ENCODE measurements at regions of chr12 and their contacts with region 1.

Region 1: GRCh38 chr12:116508145-116509121 is 50.7 kb upstream of the MAP1LC3B2 start:
- DNase-seq: no peak
- ATAC-seq: peak; percentile 46
- H3K4me3 ChIP-seq: peak overlapping the region; percentile 26 to 41
- H3K27ac ChIP-seq: peak overlapping the region; percentile 94
- H3K4me1 ChIP-seq: peaks cover 59 to 70% of the 10 kb centered on the region in 2 experiments
- H3K27me3 ChIP-seq: no peaks in the 10 kb centered on the region
- CTCF ChIP-seq: no peak
- POLR2A ChIP-seq: no peak
- RAD21 ChIP-seq: no peak

Region 2: GRCh38 chr12:116434155-116435011 is 74.0 kb before region 1 on chr12:
- CTCF ChIA-PET with region 1: no interaction called
- POLR2A ChIA-PET with region 1: interaction called, 18 read pairs
- RAD21 ChIA-PET with region 1: interaction called, 4 to 5 read pairs
- intact Hi-C with region 1: no loop called
- DNase-seq: peak; percentile 91
- ATAC-seq: peak; percentile 92
- H3K4me3 ChIP-seq: peak overlapping the region; percentile 31 to 45
- H3K27ac ChIP-seq: peak overlapping the region; percentile 93
- H3K4me1 ChIP-seq: peaks cover 19 to 48% of the 10 kb centered on the region in 2 experiments
- H3K27me3 ChIP-seq: no peaks in the 10 kb centered on the region
- CTCF ChIP-seq: no peak
- POLR2A ChIP-seq: no peak
- RAD21 ChIP-seq: no peak

Region 3: GRCh38 chr12:116492703-116493324 is 15.6 kb before region 1 on chr12:
- CTCF ChIA-PET with region 1: no interaction called
- POLR2A ChIA-PET with region 1: interaction called, 53 read pairs
- RAD21 ChIA-PET with region 1: interaction called in 1 of 2 experiments, 3 read pairs
- intact Hi-C with region 1: no loop called
- DNase-seq: peak; percentile 79
- ATAC-seq: peak; percentile 7; the same call in 1 of the 2 replicates
- H3K4me3 ChIP-seq: peak overlapping the region in 1 of 2 experiments; percentile 9; a peak in 1 of 4 replicates
- H3K27ac ChIP-seq: peak overlapping the region; percentile 99
- H3K4me1 ChIP-seq: peaks cover 53 to 70% of the 10 kb centered on the region in 2 experiments
- H3K27me3 ChIP-seq: no peaks in the 10 kb centered on the region
- CTCF ChIP-seq: no peak
- POLR2A ChIP-seq: no peak
- RAD21 ChIP-seq: 0 out of 2 replicates have a peak, but pooled peaks have one; percentile 7

Region 4: DNA sequence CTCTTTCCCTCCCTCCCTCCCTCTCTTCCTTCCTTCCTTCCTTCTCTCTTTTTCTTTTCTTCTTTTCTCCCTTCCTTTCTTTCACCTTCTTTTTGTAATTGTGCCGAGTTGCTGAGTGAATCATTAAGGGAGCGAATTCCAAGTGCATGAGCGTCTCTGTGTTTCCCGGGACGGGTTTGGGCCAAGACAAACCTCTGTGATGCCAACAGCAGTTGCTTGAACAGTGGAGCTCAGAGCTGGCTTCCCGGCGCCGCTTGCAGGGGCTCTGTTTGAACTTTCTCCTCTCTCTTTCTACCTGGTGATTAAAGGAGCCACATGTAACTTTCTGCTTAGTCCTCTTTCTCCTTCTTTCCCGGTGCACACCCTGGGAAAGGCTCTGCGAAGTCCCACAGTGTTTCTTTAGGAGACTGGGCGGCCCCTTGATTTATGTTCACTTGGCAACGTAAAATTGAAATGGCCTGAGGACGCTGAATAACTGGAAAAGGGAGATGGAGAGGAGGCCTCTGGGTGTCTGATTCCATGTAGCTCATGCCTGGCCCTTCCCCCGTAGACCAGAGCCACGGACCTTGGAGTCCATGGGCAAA is 17.1 kb after region 1 on chr12:
- CTCF ChIA-PET with region 1: no interaction called
- POLR2A ChIA-PET with region 1: interaction called, 66 read pairs
- RAD21 ChIA-PET with region 1: no interaction called
- intact Hi-C with region 1: loop called (anchors 2 kb)
- DNase-seq: peak; percentile 80
- ATAC-seq: peak; percentile 53
- H3K4me3 ChIP-seq: peak overlapping the region; percentile 24 to 36
- H3K27ac ChIP-seq: peak overlapping the region; percentile 97
- H3K4me1 ChIP-seq: peaks cover 85 to 100% of the 10 kb centered on the region in 2 experiments
- H3K27me3 ChIP-seq: no peaks in the 10 kb centered on the region
- CTCF ChIP-seq: no peak
- POLR2A ChIP-seq: no peak
- RAD21 ChIP-seq: no peak

Region 5: DNA sequence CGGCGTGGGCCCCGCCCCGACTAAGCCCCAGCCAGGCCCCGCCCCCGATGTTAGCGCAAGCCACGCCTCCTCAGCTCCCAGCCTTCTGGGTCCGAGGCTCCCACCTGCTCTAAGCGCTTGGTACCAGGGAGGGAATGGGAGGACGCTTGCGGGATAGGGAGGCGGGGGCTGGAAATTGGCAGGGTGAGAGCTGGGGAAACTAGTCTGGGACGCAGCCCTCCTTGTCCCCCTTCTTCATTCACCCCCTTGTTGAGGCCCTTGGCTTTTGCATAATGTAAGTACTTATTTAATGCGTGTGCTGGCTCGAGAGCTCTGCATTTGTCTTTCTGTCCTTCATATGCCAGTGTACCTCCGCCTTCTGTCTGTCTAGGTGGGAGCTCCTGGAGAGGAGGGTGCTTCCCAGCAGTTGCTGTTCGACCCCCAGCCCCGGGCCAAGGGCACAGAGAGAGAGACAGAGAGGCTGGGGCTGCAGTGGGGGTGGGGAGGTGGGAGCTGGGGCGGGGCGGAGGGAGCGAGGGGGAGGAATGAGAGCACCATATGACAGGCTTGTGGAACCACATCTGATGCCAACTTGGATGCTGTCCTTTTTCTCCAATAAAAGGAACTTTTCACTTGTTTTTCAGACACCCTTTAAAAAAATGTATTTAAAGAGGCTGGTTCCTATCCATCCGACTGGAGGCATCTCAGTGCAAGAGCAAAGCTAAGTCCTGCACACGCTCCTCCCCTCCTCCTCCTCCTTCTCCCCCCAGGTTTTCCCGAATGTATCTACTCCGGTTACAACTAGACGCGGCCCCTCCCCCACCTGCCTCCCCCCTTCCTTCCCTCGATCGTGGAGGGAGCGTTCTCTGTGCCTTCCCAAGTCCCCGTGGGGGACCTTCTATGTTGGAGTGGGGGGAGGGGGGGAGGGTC is 25.2 kb after region 1 on chr12:
- CTCF ChIA-PET with region 1: no interaction called
- POLR2A ChIA-PET with region 1: interaction called, 28 read pairs
- RAD21 ChIA-PET with region 1: interaction called, 3 read pairs
- intact Hi-C with region 1: no loop called
- DNase-seq: peak; percentile 62
- ATAC-seq: peak; percentile 86
- H3K4me3 ChIP-seq: peak overlapping the region; percentile 74 to 83
- H3K27ac ChIP-seq: peak overlapping the region; percentile 83
- H3K4me1 ChIP-seq: peaks cover 67 to 89% of the 10 kb centered on the region in 2 experiments
- H3K27me3 ChIP-seq: no peaks in the 10 kb centered on the region
- CTCF ChIP-seq: no peak
- POLR2A ChIP-seq: peak; percentile 38
- RAD21 ChIP-seq: no peak

Region 6: GRCh38 chr12:116539905-116540482 is 31.6 kb after region 1 on chr12:
- CTCF ChIA-PET with region 1: no interaction called
- POLR2A ChIA-PET with region 1: interaction called, 12 read pairs
- RAD21 ChIA-PET with region 1: no interaction called
- intact Hi-C with region 1: no loop called
- DNase-seq: no peak
- ATAC-seq: peak; percentile 12; the same call in 1 of the 2 replicates
- H3K4me3 ChIP-seq: no peak overlapping the region
- H3K27ac ChIP-seq: peak overlapping the region; percentile 29; the same call in 1 of the 2 replicates
- H3K4me1 ChIP-seq: peaks cover 54 to 74% of the 10 kb centered on the region in 2 experiments
- H3K27me3 ChIP-seq: no peaks in the 10 kb centered on the region
- CTCF ChIP-seq: no peak
- POLR2A ChIP-seq: no peak
- RAD21 ChIP-seq: no peak

Measured in HCT116 (cell line).